ENCODE measurements at regions of chr6 and their contacts with region 1.

Region 1: DNA sequence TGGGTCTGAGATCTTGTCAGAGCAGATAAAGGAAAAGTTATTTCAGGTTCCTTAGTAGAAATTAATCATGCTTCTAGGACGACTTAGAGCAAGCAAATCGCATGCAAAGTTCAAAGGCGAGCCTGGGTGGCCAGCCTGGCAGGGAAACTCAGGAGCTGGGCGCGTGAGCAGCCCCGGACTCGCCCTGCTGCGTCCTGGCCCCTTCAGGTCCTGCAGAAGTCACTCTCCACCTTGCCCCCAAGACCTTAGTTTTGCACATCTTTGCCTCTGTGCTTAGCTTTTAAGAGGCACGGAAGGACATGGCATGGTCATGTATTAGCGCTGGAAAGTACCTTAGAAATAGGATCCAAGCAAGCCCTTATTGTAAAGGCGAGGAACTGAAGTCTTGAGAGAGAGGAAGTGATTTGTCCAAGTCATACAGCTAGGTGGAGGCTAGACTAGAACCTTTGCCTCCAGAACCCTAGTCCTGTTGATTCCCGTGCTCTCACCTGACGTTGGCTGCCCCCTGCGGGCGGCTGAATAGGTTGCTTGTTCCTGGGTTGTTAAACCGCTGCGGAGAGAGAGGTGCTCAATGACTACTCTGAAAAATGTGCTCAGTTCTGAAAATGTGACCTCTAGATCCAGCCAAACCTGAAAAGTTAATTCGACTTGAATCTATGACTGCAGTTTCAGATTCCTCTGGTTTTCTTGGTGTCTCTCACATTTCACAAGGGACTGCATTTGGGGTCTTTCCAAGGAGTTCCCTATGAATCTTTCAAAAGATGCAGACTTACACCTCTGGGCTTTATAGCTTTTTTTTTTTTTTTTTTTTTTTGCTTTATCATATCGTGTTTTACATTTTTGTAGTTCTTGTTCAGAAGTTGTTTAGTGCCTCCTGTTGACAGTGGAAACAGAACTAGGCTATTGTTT is 2.7 kb downstream of the MYB start:
- DNase-seq: peak; percentile 48
- ATAC-seq: peak; percentile 38
- H3K4me3 Mint-ChIP-seq: peak overlapping the region; percentile 87
- H3K27ac Mint-ChIP-seq: peak overlapping the region; percentile 57
- H3K4me1 Mint-ChIP-seq: peaks cover 30% of the 10 kb centered on the region
- H3K27me3 Mint-ChIP-seq: no peaks in the 10 kb centered on the region
- CTCF ChIP-seq: no peak

Region 2: DNA sequence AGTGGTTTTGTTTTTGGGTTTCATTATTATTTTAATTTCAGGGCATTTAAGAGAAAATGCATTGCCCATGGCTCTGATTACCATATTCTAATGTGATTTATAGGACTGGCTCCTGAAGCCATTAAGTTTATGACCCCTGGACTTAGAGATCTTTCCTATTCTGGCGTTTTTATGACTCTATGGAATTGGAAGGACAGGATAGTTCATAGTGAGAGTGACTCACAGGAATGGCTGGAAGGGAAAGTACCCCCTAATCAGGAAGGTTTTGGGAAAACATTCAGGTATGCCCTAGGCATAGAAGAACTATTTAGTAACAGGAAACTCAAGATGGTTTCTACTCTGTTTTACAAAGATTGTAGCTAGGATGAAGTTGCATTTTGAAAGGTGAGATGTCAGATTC is 1022.8 kb before region 1 on chr6:
- CTCF ChIA-PET with region 1: no interaction called
- POLR2A ChIA-PET with region 1: no interaction called
- intact Hi-C with region 1: loop called (anchors 5 kb)
- DNase-seq: no peak
- ATAC-seq: no peak
- H3K4me3 Mint-ChIP-seq: no peak overlapping the region
- H3K27ac Mint-ChIP-seq: no peak overlapping the region
- H3K4me1 Mint-ChIP-seq: no peaks in the 10 kb centered on the region
- H3K27me3 Mint-ChIP-seq: no peaks in the 10 kb centered on the region
- CTCF ChIP-seq: no peak

Region 3: GRCh38 chr6:135054569-135055498 is 129.0 kb before region 1 on chr6 and contains the start of gene HBS1L:
- CTCF ChIA-PET with region 1: interaction called, 6 read pairs
- POLR2A ChIA-PET with region 1: interaction called, 16 read pairs
- intact Hi-C with region 1: loop called (anchors 1 kb)
- DNase-seq: peak; percentile 94
- ATAC-seq: peak; percentile 98
- H3K4me3 Mint-ChIP-seq: peak within 1 kb of the TSS; percentile 98
- H3K27ac Mint-ChIP-seq: peak within 1 kb of the TSS; percentile 97
- H3K4me1 Mint-ChIP-seq: peaks cover 35% of the 10 kb centered on the region
- H3K27me3 Mint-ChIP-seq: no peaks in the 10 kb centered on the region
- CTCF ChIP-seq: no peak
- total RNA-seq, gene HBS1L: 60.2 and 67.5 TPM in 2 replicates

Region 4: GRCh38 chr6:135162678-135163439 is 20.9 kb before region 1 on chr6:
- CTCF ChIA-PET with region 1: interaction called, 14 read pairs
- POLR2A ChIA-PET with region 1: interaction called, 14 read pairs
- intact Hi-C with region 1: loop called (anchors 1 kb)
- DNase-seq: no peak
- ATAC-seq: peak; percentile 29
- H3K4me3 Mint-ChIP-seq: peak overlapping the region; percentile 25
- H3K27ac Mint-ChIP-seq: peak overlapping the region; percentile 79
- H3K4me1 Mint-ChIP-seq: peaks cover 20% of the 10 kb centered on the region
- H3K27me3 Mint-ChIP-seq: no peaks in the 10 kb centered on the region
- CTCF ChIP-seq: peak; percentile 40

Region 5: GRCh38 chr6:135438907-135439535 is 255.2 kb after region 1 on chr6:
- CTCF ChIA-PET with region 1: no interaction called
- POLR2A ChIA-PET with region 1: no interaction called
- intact Hi-C with region 1: loop called (anchors 5 kb)
- DNase-seq: no peak
- ATAC-seq: peak; percentile 25
- H3K4me3 Mint-ChIP-seq: no peak overlapping the region
- H3K27ac Mint-ChIP-seq: no peak overlapping the region
- H3K4me1 Mint-ChIP-seq: peaks cover 22% of the 10 kb centered on the region
- H3K27me3 Mint-ChIP-seq: no peaks in the 10 kb centered on the region
- CTCF ChIP-seq: no peak

Measured in activated B cell treated with CpG ODN at 0.5 μM for 24 hours (primary cell).